Prostate gland (tissue), 2 donors: ENCODE measurements at regions of chr16 and their contacts with region 1.

Region 1: GRCh38 chr16:20675488-20676267 is 21.8 kb downstream of the ACSM1 start:
- DNase-seq: peak; percentile 76
- H3K4me3 ChIP-seq: peak overlapping the region; percentile 28 to 35
- H3K27ac ChIP-seq: peak overlapping the region; percentile 85 to 89
- H3K4me1 ChIP-seq: peaks cover 11% of the 10 kb centered on the region
- H3K27me3 ChIP-seq: no peaks in the 10 kb centered on the region
- CTCF ChIP-seq: no peak
- POLR2A ChIP-seq: no peak

Region 2: GRCh38 chr16:19717771-19718602 is 957.7 kb before region 1 on chr16 and contains the starts of genes IQCK and KNOP1:
- intact Hi-C with region 1: no loop called
- DNase-seq: peak; percentile 84
- H3K4me3 ChIP-seq: peak within 1 kb of the TSS; percentile 95 to 98
- H3K27ac ChIP-seq: peak within 1 kb of the TSS; percentile 67 to 69
- H3K4me1 ChIP-seq: no peaks in the 10 kb centered on the region
- H3K27me3 ChIP-seq: no peaks in the 10 kb centered on the region
- CTCF ChIP-seq: peak in 1 of 4 experiments; percentile 17
- POLR2A ChIP-seq: no peak
- total RNA-seq, gene IQCK: 26.0 to 42.2 TPM
- total RNA-seq, gene KNOP1: 11.2 to 26.6 TPM

Region 3: DNA sequence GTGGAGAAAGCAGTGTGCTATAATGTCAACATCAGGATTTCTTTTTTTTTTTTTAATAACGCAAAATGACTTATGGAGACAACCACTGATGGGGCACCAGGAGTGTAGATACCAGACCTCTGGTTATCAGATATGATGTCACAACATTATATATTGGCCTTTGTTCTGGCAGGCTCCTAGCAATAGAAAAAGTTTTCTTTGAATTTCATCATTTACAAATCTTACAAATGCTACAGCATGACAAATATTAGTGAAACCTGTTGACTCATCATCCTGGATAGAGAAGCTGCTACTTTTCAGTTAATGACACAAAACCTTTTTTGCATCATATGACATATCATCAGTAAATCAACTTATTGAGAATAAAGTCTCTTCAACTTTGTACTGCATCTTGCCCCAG is 59.8 kb after region 1 on chr16:
- intact Hi-C with region 1: loop called (anchors 5 kb)
- DNase-seq: no peak
- H3K4me3 ChIP-seq: no peak overlapping the region
- H3K27ac ChIP-seq: no peak overlapping the region
- H3K4me1 ChIP-seq: peaks cover 7% of the 10 kb centered on the region
- H3K27me3 ChIP-seq: no peaks in the 10 kb centered on the region
- CTCF ChIP-seq: no peak
- POLR2A ChIP-seq: no peak

Region 4: GRCh38 chr16:20774703-20775362 is 99.2 kb after region 1 on chr16:
- intact Hi-C with region 1: no loop called
- DNase-seq: peak; percentile 39
- H3K4me3 ChIP-seq: no peak overlapping the region
- H3K27ac ChIP-seq: no peak overlapping the region
- H3K4me1 ChIP-seq: no peaks in the 10 kb centered on the region
- H3K27me3 ChIP-seq: no peaks in the 10 kb centered on the region
- CTCF ChIP-seq: peak in 3 of 4 experiments; percentile 32 to 40 (median 36)
- POLR2A ChIP-seq: no peak